ENCODE measurements at regions of chr1 and their contacts with region 1.

Region 1: GRCh38 chr1:219660666-219661463 is 48.0 kb upstream of the ZC3H11B start:
- DNase-seq: peak; percentile 81 to 91
- H3K4me3 ChIP-seq: peak overlapping the region; percentile 11 to 55 (median 38); a peak in 7 of 8 replicates
- H3K27ac ChIP-seq: peak overlapping the region; percentile 49
- H3K4me1 ChIP-seq: peaks cover 0 to 8% (median 3%) of the 10 kb centered on the region in 4 experiments; a peak in 5 of 7 replicates
- H3K27me3 ChIP-seq: no peaks in the 10 kb centered on the region
- CTCF ChIP-seq: peak; percentile 83 to 94 (median 93)
- EP300 ChIP-seq: peak in 1 of 2 experiments; percentile 28; a peak in 1 of 3 replicates
- POLR2A ChIP-seq: peak in 1 of 2 experiments; percentile 36; a peak in 1 of 3 replicates
- RAD21 ChIP-seq: peak; percentile 94 to 96

Region 2: GRCh38 chr1:219713981-219714381 is 53.1 kb after region 1 on chr1:
- CTCF ChIA-PET with region 1: no interaction called
- POLR2A ChIA-PET with region 1: no interaction called
- DNase-seq: no peak
- H3K4me3 ChIP-seq: no peak overlapping the region
- H3K27ac ChIP-seq: no peak overlapping the region
- H3K4me1 ChIP-seq: 0 out of 7 replicates have a peak, but pooled peaks cover 0 to 2% (median 0%) of the 10 kb centered on the region in 4 experiments
- H3K27me3 ChIP-seq: no peaks in the 10 kb centered on the region
- CTCF ChIP-seq: no peak
- EP300 ChIP-seq: no peak
- POLR2A ChIP-seq: no peak
- RAD21 ChIP-seq: no peak

Region 3: GRCh38 chr1:219744652-219745469 is 84.0 kb after region 1 on chr1:
- CTCF ChIA-PET with region 1: interaction called, 14 read pairs
- POLR2A ChIA-PET with region 1: no interaction called
- DNase-seq: no peak
- H3K4me3 ChIP-seq: no peak overlapping the region
- H3K27ac ChIP-seq: no peak overlapping the region
- H3K4me1 ChIP-seq: no peaks in the 10 kb centered on the region
- H3K27me3 ChIP-seq: no peaks in the 10 kb centered on the region
- CTCF ChIP-seq: no peak
- EP300 ChIP-seq: no peak
- POLR2A ChIP-seq: no peak
- RAD21 ChIP-seq: no peak

Measured in H1 (cell line).